HAP-1 (cell line): ENCODE measurements at regions of chr1 and their contacts with region 1.

Region 1: GRCh38 chr1:184805667-184806295 is 51.1 kb upstream of the EDEM3 start:
- DNase-seq: peak; percentile 77 to 90
- H3K4me3 ChIP-seq: no peak overlapping the region
- H3K4me1 ChIP-seq: 0 out of 2 replicates have a peak, but pooled peaks cover 2% of the 10 kb centered on the region
- H3K27me3 ChIP-seq: no peaks in the 10 kb centered on the region

Region 2: DNA sequence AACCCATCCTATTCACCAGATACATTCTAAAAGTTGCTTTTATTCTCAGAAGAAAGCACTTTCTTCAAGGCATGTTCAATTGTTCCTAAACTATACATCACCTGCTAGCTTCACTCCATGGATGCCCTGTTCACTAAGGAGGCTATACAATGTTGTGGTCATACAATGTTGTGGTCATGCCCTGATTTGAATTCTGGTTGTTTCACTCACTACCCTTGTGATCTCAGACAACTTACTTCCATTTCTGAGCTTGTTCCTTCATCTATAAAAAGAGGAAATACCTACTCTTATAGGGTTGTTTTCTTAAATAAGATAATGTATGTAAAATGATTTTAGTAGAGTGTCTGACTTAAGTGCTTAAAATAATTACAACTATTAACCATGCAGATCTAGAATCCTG is 70.8 kb before region 1 on chr1:
- in situ Hi-C with region 1: no loop called
- DNase-seq: no peak
- H3K4me3 ChIP-seq: no peak overlapping the region
- H3K4me1 ChIP-seq: no peaks in the 10 kb centered on the region
- H3K27me3 ChIP-seq: no peaks in the 10 kb centered on the region

Region 3: GRCh38 chr1:184975208-184975870 is 169.6 kb after region 1 on chr1:
- in situ Hi-C with region 1: loop called (anchors 5 kb)
- DNase-seq: no peak
- H3K4me3 ChIP-seq: no peak overlapping the region
- H3K4me1 ChIP-seq: peaks cover 7% of the 10 kb centered on the region
- H3K27me3 ChIP-seq: no peaks in the 10 kb centered on the region

Region 4: DNA sequence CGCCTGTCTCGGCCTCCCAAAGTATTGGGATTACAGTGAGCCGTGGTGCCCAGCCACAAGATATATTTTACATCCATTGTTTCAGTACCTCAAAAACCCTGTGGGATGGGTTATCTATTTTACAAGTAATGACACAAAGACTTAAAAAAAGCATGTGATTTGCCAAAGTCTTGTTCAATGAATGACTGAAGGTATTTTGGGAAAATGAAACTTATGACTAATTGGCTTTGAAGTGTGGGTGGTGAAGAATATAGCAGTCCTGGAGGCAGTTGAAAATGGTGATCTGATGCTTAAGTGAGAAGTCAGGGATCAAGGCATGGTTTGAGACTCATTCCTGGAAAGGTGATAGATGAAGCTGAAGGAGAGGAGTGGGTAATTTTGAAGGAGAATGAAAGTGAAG is 354.2 kb after region 1 on chr1:
- in situ Hi-C with region 1: loop called (anchors 10 kb)
- DNase-seq: no peak
- H3K4me3 ChIP-seq: no peak overlapping the region
- H3K4me1 ChIP-seq: no peaks in the 10 kb centered on the region
- H3K27me3 ChIP-seq: no peaks in the 10 kb centered on the region